ENCODE measurements at regions of chr7 and their contacts with region 1.

Region 1: DNA sequence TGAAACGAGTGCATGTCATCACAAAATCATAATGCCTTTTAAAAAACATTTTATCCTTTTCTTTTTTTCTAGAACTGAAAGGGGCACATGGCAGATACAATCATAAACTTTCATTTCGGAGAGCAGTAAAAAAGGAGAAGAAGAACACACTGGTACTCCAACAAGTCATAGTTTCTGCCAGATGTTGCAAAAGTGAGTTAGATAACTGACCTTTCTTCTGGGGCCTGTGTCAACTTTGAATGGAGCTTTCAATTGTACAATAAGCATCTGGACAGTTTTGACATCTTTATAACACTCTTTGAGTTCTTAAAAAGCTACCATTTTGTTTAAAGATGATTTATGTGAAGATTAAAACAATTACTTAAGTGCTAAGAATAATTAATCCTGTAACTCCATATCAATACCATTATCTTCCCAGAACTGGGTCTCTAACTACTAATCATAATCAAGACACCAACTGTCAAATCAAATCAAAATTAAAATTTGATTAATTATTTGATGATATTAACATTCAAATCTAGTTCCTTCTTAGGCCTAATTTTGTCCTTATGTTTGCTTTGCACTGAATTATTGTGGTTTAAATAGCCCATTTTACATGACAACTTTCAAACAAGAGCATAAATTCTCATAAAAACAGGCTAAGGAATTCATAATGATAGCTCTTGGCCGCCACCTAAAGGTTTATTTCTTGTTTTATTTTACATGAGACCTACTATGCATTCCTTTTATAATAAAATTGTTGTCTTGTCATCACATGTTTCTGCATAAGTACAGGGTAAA is 19.5 kb upstream of the ITGB8 start:
- DNase-seq: peak; percentile 25
- ATAC-seq: no peak
- H3K4me3 ChIP-seq: no peak overlapping the region
- H3K27ac ChIP-seq: no peak overlapping the region
- H3K4me1 ChIP-seq: peaks cover 11% of the 10 kb centered on the region
- H3K27me3 ChIP-seq: no peaks in the 10 kb centered on the region
- CTCF ChIP-seq: peak; percentile 42
- EP300 ChIP-seq: no peak
- POLR2A ChIP-seq: no peak
- RAD21 ChIP-seq: no peak

Region 2: GRCh38 chr7:19713676-19714075 is 597.5 kb before region 1 on chr7:
- CTCF ChIA-PET with region 1: no interaction called
- POLR2A ChIA-PET with region 1: no interaction called
- in situ Hi-C with region 1: no loop called
- intact Hi-C with region 1: loop called (anchors 2 kb)
- DNase-seq: peak; percentile 23
- ATAC-seq: no peak
- H3K4me3 ChIP-seq: no peak overlapping the region
- H3K27ac ChIP-seq: no peak overlapping the region
- H3K4me1 ChIP-seq: peaks cover 10% of the 10 kb centered on the region; the same call in 1 of the 2 replicates
- H3K27me3 ChIP-seq: peaks cover 0 to under 1% of the 10 kb centered on the region in 2 experiments; a peak in 1 of 5 replicates
- CTCF ChIP-seq: peak; percentile 47
- EP300 ChIP-seq: no peak
- POLR2A ChIP-seq: no peak
- RAD21 ChIP-seq: no peak

Region 3: DNA sequence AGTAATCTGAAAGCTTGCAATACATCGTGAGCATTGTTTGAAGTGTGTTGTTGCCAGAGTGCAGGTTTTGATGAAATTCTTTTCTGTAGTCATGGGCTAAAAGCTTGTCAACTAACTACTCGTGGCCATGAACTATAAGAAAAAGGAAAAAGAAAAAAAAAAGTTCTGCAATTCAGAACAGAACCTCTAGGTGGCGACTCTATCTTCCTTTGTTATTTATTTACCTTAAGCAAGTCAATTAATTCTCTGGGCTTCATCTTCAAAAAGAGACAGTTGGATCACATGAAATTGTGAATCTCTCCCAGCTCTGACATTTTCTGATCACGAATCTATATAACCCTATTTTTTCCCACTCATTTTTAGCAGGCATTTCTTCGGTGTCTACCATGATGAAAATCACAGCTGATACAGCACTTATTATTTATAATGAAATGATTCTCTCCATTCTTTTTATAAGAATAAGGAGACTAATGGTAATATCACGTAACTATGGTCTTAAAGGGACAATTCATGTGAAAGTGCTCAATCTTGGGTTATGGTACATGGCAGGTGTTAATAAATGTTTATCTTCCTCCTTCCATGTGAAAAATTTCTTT is 556.5 kb before region 1 on chr7:
- CTCF ChIA-PET with region 1: interaction called, 7 read pairs
- POLR2A ChIA-PET with region 1: no interaction called
- in situ Hi-C with region 1: loop called (anchors 25 kb)
- intact Hi-C with region 1: loop called (anchors 1 kb)
- DNase-seq: peak; percentile 35
- ATAC-seq: no peak
- H3K4me3 ChIP-seq: no peak overlapping the region
- H3K27ac ChIP-seq: no peak overlapping the region
- H3K4me1 ChIP-seq: no peaks in the 10 kb centered on the region
- H3K27me3 ChIP-seq: no peaks in the 10 kb centered on the region
- CTCF ChIP-seq: peak; percentile 50
- EP300 ChIP-seq: no peak
- POLR2A ChIP-seq: no peak
- RAD21 ChIP-seq: no peak

Region 4: DNA sequence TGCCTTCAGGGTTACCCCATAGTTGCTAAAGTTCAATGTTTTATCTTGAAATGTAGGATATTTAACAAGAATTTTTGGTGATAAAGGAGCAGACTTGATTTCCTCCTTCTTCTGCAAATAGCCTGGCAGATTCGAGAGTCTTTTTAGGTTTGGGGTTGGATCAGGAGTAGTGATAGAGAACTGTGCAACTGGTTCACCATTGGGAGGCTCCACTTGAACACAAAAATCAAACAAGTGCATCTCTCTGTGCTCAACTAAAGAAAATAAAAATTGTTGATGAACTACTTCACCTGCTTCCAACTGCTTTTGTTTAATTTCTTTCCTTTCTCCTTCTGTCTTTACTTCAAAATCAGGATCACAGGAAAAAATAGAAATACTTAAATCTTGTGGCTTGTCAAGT is 152.5 kb before region 1 on chr7:
- CTCF ChIA-PET with region 1: interaction called, 3 read pairs
- POLR2A ChIA-PET with region 1: no interaction called
- in situ Hi-C with region 1: no loop called
- intact Hi-C with region 1: loop called (anchors 1 kb)
- DNase-seq: peak; percentile 1
- ATAC-seq: no peak
- H3K4me3 ChIP-seq: no peak overlapping the region
- H3K27ac ChIP-seq: no peak overlapping the region
- H3K4me1 ChIP-seq: no peaks in the 10 kb centered on the region
- H3K27me3 ChIP-seq: no peaks in the 10 kb centered on the region
- CTCF ChIP-seq: peak; percentile 47
- EP300 ChIP-seq: no peak
- POLR2A ChIP-seq: no peak
- RAD21 ChIP-seq: no peak

Measured in HepG2 (cell line).